Activated naive CD4-positive, alpha-beta T cell treated with anti-CD3 and anti-CD28 coated beads for 36 hours (primary cell): ENCODE measurements at regions of chr15 and their contacts with region 1.

Region 1: DNA sequence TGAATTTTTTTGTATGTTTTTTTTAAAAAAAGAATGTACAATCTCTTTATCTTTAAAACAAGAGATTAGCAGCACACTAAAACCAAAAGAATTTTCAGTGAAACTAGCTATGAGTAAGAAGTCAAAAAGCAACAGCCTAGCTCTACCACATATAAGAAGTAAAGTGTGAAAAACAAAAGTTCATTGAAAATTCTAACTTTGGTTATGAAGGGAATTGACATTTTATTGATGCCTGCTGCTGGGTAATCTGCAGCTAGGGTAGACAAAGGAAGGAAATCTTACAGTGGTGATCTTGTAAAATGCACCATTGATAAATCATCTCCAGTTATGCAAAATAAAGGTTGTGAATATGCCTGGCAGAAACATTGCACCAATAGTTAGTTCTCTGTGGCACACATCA is 37.8 kb upstream of the FOXB1 start:
- DNase-seq: no peak
- H3K4me3 Mint-ChIP-seq: no peak overlapping the region
- H3K27ac Mint-ChIP-seq: no peak overlapping the region
- H3K4me1 Mint-ChIP-seq: peaks cover 14% of the 10 kb centered on the region
- H3K27me3 Mint-ChIP-seq: no peaks in the 10 kb centered on the region

Region 2: GRCh38 chr15:59924812-59925522 is 41.3 kb before region 1 on chr15:
- CTCF ChIA-PET with region 1: no interaction called
- intact Hi-C with region 1: no loop called
- DNase-seq: no peak
- H3K4me3 Mint-ChIP-seq: no peak overlapping the region
- H3K27ac Mint-ChIP-seq: no peak overlapping the region
- H3K4me1 Mint-ChIP-seq: peaks cover 6% of the 10 kb centered on the region
- H3K27me3 Mint-ChIP-seq: peaks cover 10% of the 10 kb centered on the region

Region 3: DNA sequence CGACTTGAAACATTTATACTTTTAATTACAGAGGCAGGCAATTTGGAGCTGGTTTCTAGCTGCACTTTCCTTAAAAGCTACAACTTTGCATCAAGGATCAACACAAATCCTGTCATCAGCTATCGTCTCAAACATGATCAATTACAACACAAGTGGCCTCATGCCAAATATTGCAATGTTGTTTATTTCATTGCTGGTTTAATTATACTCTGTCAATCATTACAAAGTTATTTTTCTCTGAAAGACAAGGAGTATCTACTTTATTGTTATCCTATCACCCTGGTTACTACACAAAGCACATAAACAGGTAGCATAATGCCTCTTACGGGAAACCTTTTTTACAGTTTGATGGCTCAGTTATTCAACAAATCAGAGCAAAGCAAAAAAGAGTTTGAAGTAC is 20.2 kb before region 1 on chr15:
- CTCF ChIA-PET with region 1: no interaction called
- intact Hi-C with region 1: no loop called
- DNase-seq: no peak
- H3K4me3 Mint-ChIP-seq: no peak overlapping the region
- H3K27ac Mint-ChIP-seq: no peak overlapping the region
- H3K4me1 Mint-ChIP-seq: no peaks in the 10 kb centered on the region
- H3K27me3 Mint-ChIP-seq: no peaks in the 10 kb centered on the region

Region 4: GRCh38 chr15:59976480-59977271 is 10.4 kb after region 1 on chr15:
- CTCF ChIA-PET with region 1: no interaction called
- intact Hi-C with region 1: loop called (anchors 1 kb)
- DNase-seq: peak; percentile 67
- H3K4me3 Mint-ChIP-seq: peak overlapping the region; percentile 25
- H3K27ac Mint-ChIP-seq: no peak overlapping the region
- H3K4me1 Mint-ChIP-seq: peaks cover 21% of the 10 kb centered on the region
- H3K27me3 Mint-ChIP-seq: no peaks in the 10 kb centered on the region